SK-N-SH (cell line): ENCODE measurements at regions of chr7 and their contacts with region 1.

Region 1: DNA sequence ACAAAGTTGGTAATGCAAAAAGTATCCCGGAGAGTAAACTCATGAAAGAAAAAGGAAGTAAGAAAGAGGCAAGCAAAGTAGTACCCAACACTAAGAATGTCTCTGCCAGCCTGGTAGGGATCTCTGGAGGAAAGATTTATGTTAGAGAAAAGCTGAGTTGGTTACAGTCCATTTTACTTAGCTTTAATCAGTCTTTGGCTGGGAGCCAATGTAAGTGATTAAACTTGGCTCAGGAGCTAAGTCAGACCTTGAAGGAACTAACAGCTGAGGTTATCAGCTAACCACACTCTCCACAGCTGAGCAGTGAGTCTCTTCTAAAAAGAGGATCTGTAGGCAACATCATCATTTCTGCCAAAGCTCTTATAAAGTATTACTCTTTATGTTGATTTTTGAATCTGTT is 148.0 kb downstream of the ANKRD7 start:
- DNase-seq: no peak
- H3K4me3 ChIP-seq: no peak overlapping the region
- H3K27ac ChIP-seq: no peak overlapping the region
- H3K4me1 ChIP-seq: no peaks in the 10 kb centered on the region
- H3K27me3 ChIP-seq: no peaks in the 10 kb centered on the region
- CTCF ChIP-seq: no peak
- EP300 ChIP-seq: no peak
- RAD21 ChIP-seq: no peak

Region 2: GRCh38 chr7:118352854-118353453 is 19.6 kb before region 1 on chr7:
- CTCF ChIA-PET with region 1: interaction called, 12 read pairs
- POLR2A ChIA-PET with region 1: no interaction called
- DNase-seq: peak; percentile 16
- H3K4me3 ChIP-seq: no peak overlapping the region
- H3K27ac ChIP-seq: no peak overlapping the region
- H3K4me1 ChIP-seq: no peaks in the 10 kb centered on the region
- H3K27me3 ChIP-seq: no peaks in the 10 kb centered on the region
- CTCF ChIP-seq: peak; percentile 57
- EP300 ChIP-seq: no peak
- RAD21 ChIP-seq: peak; percentile 88

Region 3: GRCh38 chr7:118478931-118479330 is 106.4 kb after region 1 on chr7:
- CTCF ChIA-PET with region 1: no interaction called
- POLR2A ChIA-PET with region 1: no interaction called
- DNase-seq: no peak
- H3K4me3 ChIP-seq: no peak overlapping the region
- H3K27ac ChIP-seq: no peak overlapping the region
- H3K4me1 ChIP-seq: no peaks in the 10 kb centered on the region
- H3K27me3 ChIP-seq: no peaks in the 10 kb centered on the region
- CTCF ChIP-seq: no peak
- EP300 ChIP-seq: no peak
- RAD21 ChIP-seq: no peak